Activated B cell treated with CpG ODN at 0.5 μM for 24 hours (primary cell): ENCODE measurements at regions of chr7 and their contacts with region 1.

Region 1: DNA sequence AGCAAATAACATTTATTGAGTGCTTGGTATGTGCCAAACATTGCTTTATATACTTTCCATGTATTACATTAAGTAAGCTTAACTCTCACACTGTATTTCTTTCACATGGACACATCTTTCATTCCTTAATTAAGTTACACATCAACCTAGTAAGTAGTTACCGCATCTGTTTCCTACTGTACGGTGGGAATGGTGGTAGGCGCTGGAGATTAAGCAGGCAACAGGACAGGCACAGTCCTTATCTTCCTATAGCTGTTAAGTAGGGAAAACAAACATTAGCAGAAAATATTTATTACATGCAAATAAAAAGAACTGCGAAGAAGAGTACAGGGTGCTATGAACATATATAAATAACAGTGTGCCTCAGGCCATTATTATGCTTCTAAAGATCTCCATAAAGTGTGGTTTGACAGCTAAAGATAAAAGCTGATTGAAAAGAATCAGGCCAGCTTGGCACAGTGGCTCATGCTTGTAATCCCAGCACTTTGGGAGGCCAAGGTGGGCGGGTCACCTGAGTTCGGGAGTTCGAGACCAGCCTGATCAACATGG is 105.0 kb downstream of the SUGCT start:
- DNase-seq: no peak
- ATAC-seq: no peak
- H3K4me3 Mint-ChIP-seq: no peak overlapping the region
- H3K27ac Mint-ChIP-seq: no peak overlapping the region
- H3K4me1 Mint-ChIP-seq: no peaks in the 10 kb centered on the region
- H3K27me3 Mint-ChIP-seq: no peaks in the 10 kb centered on the region
- CTCF ChIP-seq: no peak

Region 2: DNA sequence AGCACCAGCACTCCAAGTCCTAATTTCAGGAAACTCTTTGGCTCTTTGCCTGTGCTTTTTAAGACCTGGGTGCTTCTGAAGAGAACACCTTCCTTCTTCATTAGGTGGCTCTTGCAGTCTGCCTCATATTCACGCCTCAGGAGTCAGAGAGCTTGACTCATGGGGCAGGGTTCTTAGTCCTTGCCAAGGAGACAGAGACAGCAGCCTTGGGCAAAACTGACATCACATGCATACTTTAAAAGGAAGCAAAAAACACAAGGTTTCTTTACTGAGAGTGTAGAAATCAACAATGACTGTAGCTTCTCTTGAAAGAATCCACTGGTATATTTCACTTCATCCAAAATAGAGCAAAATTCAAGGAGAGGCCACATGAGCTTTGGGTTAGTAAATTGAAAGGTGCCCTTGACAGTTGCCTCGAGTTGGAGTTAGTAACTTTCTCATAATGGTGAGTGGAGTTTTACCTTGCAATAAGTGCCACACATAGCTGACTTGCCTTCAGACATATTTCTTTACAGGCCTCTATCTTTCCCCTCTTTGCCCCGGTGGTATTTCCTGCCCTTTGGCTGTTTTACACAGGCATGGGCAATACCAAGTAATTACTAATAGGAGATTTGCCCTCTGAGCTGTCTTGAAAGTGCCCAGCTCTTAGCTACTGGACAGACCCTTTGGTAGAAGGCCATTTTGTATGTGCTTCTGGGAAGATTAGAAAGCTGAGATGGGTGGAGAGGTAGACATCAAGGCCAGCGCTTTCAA is 682.7 kb after region 1 on chr7:
- CTCF ChIA-PET with region 1: no interaction called
- POLR2A ChIA-PET with region 1: no interaction called
- intact Hi-C with region 1: loop called (anchors 5 kb)
- DNase-seq: no peak
- ATAC-seq: no peak
- H3K4me3 Mint-ChIP-seq: no peak overlapping the region
- H3K27ac Mint-ChIP-seq: no peak overlapping the region
- H3K4me1 Mint-ChIP-seq: no peaks in the 10 kb centered on the region
- H3K27me3 Mint-ChIP-seq: no peaks in the 10 kb centered on the region
- CTCF ChIP-seq: no peak